RWPE1 (cell line): ENCODE measurements at regions of chr1 and their contacts with region 1.

Region 1: DNA sequence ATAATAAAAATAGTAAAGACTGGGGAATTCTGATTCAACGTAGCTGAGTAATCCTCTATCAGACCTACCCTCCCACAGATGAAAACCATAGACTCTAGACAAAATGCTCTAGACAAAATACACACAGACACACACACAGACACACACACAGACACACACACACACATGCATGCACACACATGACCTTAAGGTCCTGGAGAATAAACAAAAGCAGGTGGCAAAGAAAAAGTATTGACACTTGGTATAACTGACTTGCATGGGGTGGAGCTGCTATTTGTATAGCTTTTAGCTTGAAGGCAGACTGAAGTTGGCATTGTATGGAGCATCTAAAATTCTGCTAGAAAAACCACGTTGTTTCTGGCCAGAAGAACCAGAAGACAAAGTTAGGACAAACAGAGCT is 29.3 kb downstream of the C1orf141 start:
- DNase-seq: no peak
- H3K27ac ChIP-seq: no peak overlapping the region
- CTCF ChIP-seq: no peak

Region 2: DNA sequence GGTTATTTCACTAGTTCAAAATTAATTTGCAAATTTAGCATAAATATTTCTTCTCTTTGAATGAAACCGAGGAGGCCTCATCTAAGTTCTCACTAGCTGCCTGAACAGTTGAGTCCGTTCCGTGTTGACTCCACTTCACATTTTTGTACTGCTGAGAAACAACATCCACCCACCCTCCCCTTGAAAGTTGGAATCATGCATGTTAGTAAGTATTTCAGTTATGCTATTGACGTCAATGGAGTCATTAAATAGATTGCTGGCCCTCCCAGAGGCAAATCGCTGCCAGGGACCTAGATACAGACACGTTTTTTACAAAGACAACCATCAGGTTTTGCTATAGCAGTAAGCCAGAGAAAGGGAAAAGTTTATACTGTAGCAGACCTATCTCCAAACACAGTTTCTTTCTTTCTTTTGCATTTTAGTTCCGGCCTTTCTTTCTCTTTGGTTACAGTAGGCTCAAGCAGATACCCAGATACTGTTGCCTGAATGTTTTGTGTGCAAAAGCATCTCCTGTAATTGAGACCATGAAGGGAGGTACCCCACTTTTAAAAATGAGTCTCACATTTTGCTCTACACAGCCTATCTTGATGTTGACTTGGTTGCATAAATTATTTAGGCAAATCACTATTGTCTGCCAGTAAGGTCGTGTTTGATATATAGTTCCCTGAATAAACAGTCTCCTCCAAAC is 834.1 kb before region 1 on chr1:
- CTCF ChIA-PET with region 1: interaction called, 10 read pairs
- POLR2A ChIA-PET with region 1: no interaction called
- DNase-seq: peak; percentile 87
- H3K27ac ChIP-seq: peak overlapping the region; percentile 94
- CTCF ChIP-seq: no peak

Region 3: GRCh38 chr1:66809736-66810326 is 295.7 kb before region 1 on chr1:
- CTCF ChIA-PET with region 1: no interaction called
- POLR2A ChIA-PET with region 1: no interaction called
- DNase-seq: no peak
- H3K27ac ChIP-seq: no peak overlapping the region
- CTCF ChIP-seq: no peak